GM12878 (cell line): ENCODE measurements at regions of chr14 and their contacts with region 1.

Region 1: GRCh38 chr14:92106143-92106926 is at the start of gene ATXN3:
- DNase-seq: peak; percentile 91
- ATAC-seq: peak; percentile 95
- H3K4me3 ChIP-seq: peak within 1 kb of the TSS; percentile 98
- H3K27ac ChIP-seq: peak within 1 kb of the TSS; percentile 36
- H3K4me1 ChIP-seq: no peaks in the 10 kb centered on the region; the same call in 1 of the 2 replicates
- H3K27me3 ChIP-seq: no peaks in the 10 kb centered on the region
- CTCF ChIP-seq: peak; percentile 77 to 96 (median 83)
- EP300 ChIP-seq: 0 out of 4 replicates have a peak, but pooled peaks of 1 of the 2 experiments have one; percentile 24
- POLR2A ChIP-seq: peak; percentile 86
- RAD21 ChIP-seq: peak; percentile 39
- polyA plus RNA-seq, gene ATXN3: 17.0 to 21.6 TPM

Region 2: DNA sequence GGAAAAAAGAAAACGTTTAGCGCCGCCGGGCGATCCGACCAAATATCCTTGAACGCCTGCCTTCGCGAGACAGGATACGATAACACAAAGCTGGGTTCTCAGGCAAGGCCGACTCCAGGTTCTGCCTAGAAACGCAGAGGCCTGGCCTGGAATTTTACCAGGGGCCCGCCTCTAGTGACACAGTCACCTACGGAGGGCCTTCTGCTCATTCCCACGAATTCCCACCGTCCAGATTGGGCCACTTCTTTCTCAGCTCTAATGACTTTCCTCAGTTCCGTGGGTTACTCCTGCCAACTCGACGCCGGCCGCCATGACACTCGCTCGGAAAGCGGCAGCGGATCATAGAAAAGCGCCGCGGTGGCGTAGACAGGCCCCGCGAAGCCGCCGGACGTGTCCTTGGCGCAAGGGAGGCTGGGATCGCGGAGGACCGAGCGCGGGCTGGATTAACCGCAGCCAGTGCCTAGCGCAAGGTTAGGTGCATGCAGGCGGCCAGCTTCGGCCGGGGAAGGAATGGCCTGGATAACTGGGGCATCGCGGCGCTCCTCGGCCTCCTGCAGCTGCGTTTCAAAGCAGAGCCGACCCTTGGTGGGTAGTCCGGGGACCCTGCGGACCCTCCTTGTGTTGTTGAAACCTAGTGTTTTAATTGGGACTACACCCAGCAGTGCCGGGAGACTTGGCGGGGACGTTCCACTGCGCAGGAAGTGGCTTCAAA is 66.5 kb before region 1 on chr14 and contains the start of gene TRIP11:
- CTCF ChIA-PET with region 1: interaction called, 12 read pairs
- POLR2A ChIA-PET with region 1: interaction called, 8 read pairs
- RAD21 ChIA-PET with region 1: interaction called, 6 read pairs
- SMC1A ChIA-PET with region 1: interaction called, 3 read pairs
- in situ Hi-C with region 1: no loop called
- intact Hi-C with region 1: loop called (anchors 5 kb)
- DNase-seq: peak; percentile 72
- ATAC-seq: peak; percentile 98
- H3K4me3 ChIP-seq: peak within 1 kb of the TSS; percentile 82
- H3K27ac ChIP-seq: peak within 1 kb of the TSS; percentile 99
- H3K4me1 ChIP-seq: no peaks in the 10 kb centered on the region
- H3K27me3 ChIP-seq: no peaks in the 10 kb centered on the region
- CTCF ChIP-seq: no peak
- EP300 ChIP-seq: no peak
- POLR2A ChIP-seq: peak; percentile 99
- RAD21 ChIP-seq: no peak
- polyA plus RNA-seq, gene TRIP11: 7.1 to 32.0 TPM

Region 3: DNA sequence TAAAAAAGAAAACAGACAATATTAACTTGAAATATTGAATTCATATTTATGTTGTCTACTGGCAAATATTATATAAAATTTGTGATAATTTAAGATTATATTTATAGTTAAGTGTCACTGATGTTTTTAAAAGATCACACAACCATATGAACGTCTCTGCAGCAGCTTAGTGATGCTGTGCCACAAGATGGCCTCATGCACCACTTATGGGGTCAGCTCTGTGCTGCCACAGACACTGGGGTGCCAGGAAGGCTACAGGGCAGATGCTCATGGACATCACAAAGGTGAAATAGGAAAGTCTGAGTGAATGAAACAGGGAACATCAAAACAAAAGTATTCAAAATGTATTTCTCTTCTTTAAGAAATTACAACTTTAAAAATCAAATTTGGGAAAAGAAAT is 13.0 kb before region 1 on chr14:
- CTCF ChIA-PET with region 1: interaction called, 15 read pairs
- POLR2A ChIA-PET with region 1: no interaction called
- RAD21 ChIA-PET with region 1: interaction called, 3 read pairs
- SMC1A ChIA-PET with region 1: interaction called, 3 read pairs
- in situ Hi-C with region 1: no loop called
- intact Hi-C with region 1: no loop called
- DNase-seq: no peak
- ATAC-seq: peak; percentile 79
- H3K4me3 ChIP-seq: no peak overlapping the region
- H3K27ac ChIP-seq: no peak overlapping the region
- H3K4me1 ChIP-seq: no peaks in the 10 kb centered on the region
- H3K27me3 ChIP-seq: no peaks in the 10 kb centered on the region
- CTCF ChIP-seq: peak in 2 of 3 experiments; percentile 31 to 54; a peak in 3 of 6 replicates
- EP300 ChIP-seq: no peak
- POLR2A ChIP-seq: no peak
- RAD21 ChIP-seq: peak; percentile 40

Region 4: DNA sequence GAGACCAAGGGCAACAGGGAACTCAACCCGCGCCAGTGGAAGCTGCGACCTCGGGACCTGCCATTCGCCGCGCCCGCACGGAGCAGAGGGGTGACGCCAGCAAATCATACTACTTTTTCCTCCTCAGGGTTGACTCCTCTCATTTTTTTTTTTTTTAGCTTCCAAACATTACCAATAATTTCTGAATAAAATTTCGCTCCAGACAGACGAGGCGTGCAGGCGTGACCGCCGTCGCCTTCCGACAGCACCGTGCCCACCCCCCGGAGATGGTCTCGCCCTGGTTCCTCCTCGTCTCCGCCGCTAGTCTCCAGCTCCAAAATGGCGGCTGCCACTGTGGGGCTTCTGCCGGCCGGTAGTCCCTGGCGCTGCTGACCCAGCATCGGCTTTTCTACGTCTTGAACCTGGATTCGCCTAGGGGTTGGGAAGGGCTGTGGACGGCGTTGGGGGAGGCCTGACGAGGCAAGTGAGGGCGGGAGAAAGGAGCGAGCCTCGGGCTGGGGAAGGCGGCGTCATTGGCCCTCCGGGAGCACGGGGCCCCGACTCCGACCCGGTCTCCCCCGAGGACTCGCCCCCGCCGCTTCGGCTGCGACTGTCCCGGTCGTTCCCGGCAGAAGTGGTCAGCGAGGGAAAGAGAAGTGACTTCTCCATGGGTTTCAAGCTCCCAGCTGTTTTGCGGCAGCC is 15.5 kb after region 1 on chr14 and contains the starts of genes CPSF2 and NDUFB1:
- CTCF ChIA-PET with region 1: interaction called, 143 read pairs
- POLR2A ChIA-PET with region 1: interaction called, 45 read pairs
- RAD21 ChIA-PET with region 1: interaction called, 28 read pairs
- SMC1A ChIA-PET with region 1: interaction called, 21 read pairs
- in situ Hi-C with region 1: no loop called
- intact Hi-C with region 1: no loop called
- DNase-seq: peak; percentile 45
- ATAC-seq: peak; percentile 93
- H3K4me3 ChIP-seq: peak within 1 kb of the TSS; percentile 96
- H3K27ac ChIP-seq: peak within 1 kb of the TSS; percentile 95
- H3K4me1 ChIP-seq: peaks cover 6% of the 10 kb centered on the region; the same call in 1 of the 2 replicates
- H3K27me3 ChIP-seq: no peaks in the 10 kb centered on the region
- CTCF ChIP-seq: no peak
- EP300 ChIP-seq: no peak
- POLR2A ChIP-seq: peak; percentile 98
- RAD21 ChIP-seq: no peak
- polyA plus RNA-seq, gene CPSF2: 18.2 to 20.1 TPM
- polyA plus RNA-seq, gene NDUFB1: 626 to 780 TPM